Dendritic cell treated with granulocyte-macrophage colony-stimulating factor and Interleukin-4, amounts not matched to agents 40 ng/mL and 50 ng/mL, for 4 days (primary cell): ENCODE measurements at regions of chr17 and their contacts with region 1.

Region 1: GRCh38 chr17:39069114-39069756 is 82.2 kb downstream of the PLXDC1 start:
- H3K4me3 Mint-ChIP-seq: no peak overlapping the region
- H3K27ac Mint-ChIP-seq: no peak overlapping the region
- H3K4me1 Mint-ChIP-seq: peaks cover 18% of the 10 kb centered on the region
- H3K27me3 Mint-ChIP-seq: peaks cover 3% of the 10 kb centered on the region

Region 2: GRCh38 chr17:39001703-39002637 is 67.3 kb before region 1 on chr17:
- intact Hi-C with region 1: no loop called
- H3K4me3 Mint-ChIP-seq: peak overlapping the region; percentile 64
- H3K27ac Mint-ChIP-seq: peak overlapping the region; percentile 96
- H3K4me1 Mint-ChIP-seq: peaks cover 42% of the 10 kb centered on the region
- H3K27me3 Mint-ChIP-seq: peaks cover 7% of the 10 kb centered on the region

Region 3: GRCh38 chr17:39153599-39154051 is 84.4 kb after region 1 on chr17:
- intact Hi-C with region 1: loop called (anchors 1 kb)
- H3K4me3 Mint-ChIP-seq: peak overlapping the region; percentile 99
- H3K27ac Mint-ChIP-seq: peak overlapping the region; percentile 86
- H3K4me1 Mint-ChIP-seq: peaks cover 33% of the 10 kb centered on the region
- H3K27me3 Mint-ChIP-seq: peaks cover 37% of the 10 kb centered on the region